ENCODE measurements at regions of chr5 and their contacts with region 1.

Region 1: GRCh38 chr5:5421961-5422818 is at the start of gene ICE1:
- DNase-seq: peak; percentile 98
- ATAC-seq: peak; percentile 100
- H3K4me3 ChIP-seq: peak within 1 kb of the TSS; percentile 99
- H3K27ac ChIP-seq: peak within 1 kb of the TSS in 1 of 2 donors; percentile 84
- H3K4me1 ChIP-seq: peaks cover 1 to 7% of the 10 kb centered on the region in 2 donors
- H3K27me3 ChIP-seq: no peaks in the 10 kb centered on the region
- total RNA-seq, gene ICE1: 28.8 to 35.0 TPM

Region 2: DNA sequence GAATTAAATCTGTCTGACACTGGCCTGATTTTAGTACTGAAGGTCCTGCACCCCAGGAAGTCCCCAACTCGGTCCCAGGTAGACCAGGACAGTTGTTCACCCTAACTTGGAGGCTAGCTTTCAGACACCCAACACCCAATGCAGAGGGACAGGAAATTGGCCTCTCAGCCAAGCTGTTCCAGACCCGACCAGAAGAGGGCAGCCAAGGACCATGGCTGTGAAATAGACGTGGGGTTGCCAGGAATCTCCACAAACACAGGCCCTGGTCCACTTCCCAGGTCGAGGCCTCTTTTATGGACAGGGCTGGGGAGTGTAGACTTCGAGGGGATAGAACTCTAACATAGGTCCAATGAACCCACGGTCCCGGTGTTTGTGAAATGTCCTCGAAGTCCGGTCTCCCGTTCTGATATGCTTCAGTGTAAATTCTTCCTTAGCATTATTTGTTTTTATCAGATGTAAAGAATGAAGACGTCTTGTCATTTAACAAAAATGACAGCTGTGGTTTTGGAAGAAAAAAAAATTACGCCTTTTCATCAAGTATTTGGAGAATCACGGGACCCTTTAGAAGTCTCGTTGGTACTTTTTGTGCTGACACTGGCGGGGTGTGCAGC is 542.4 kb before region 1 on chr5:
- intact Hi-C with region 1: loop called in 1 of 2 experiments (anchors 5 kb)
- DNase-seq: peak; percentile 71 to 87
- ATAC-seq: peak; percentile 83
- H3K4me3 ChIP-seq: no peak overlapping the region
- H3K27ac ChIP-seq: no peak overlapping the region
- H3K4me1 ChIP-seq: no peaks in the 10 kb centered on the region
- H3K27me3 ChIP-seq: no peaks in the 10 kb centered on the region

Region 3: DNA sequence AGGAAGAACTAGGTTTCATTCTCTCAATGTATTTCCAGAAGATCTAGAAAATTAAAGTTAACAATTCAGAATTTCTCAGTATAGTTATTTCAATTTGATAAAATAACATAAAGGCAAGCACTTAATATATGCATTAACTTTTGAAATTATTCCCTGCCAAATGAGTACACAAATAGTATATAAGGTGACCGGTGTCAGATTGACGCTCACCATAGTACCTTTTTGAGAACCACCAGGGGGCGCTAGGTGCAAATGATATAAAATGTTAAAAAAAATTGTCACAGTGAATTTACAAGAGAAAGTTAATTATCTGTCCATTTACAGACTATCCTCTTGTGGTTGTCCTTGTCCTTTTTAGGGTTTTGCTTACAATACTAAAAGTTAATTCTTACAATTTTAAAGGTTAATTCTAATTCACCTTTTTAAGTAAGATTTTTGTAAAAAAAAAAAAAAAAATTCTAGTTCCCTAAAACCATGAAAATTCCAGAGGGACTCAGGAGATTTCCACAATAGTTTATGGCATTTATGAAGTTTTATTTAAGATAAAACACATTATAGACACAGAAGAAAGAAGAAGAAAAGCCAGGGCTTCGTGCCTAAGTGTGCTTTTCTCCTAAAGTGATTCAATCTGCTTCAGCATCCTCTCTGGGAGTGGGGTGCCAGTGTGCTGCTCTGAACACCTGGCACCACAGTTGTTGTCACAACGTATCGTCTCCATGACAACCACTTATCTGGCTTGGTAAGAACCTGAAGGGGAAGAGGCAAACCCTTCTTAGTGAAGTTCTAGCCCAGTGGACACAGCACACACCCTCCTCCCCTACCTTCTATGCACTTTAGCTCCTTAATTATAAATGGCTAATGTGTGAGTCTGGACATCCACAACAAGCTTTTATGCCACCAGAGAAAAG is 280.3 kb before region 1 on chr5:
- intact Hi-C with region 1: loop called (anchors 2 kb)
- DNase-seq: no peak
- ATAC-seq: peak; percentile 57
- H3K4me3 ChIP-seq: no peak overlapping the region
- H3K27ac ChIP-seq: no peak overlapping the region
- H3K4me1 ChIP-seq: no peaks in the 10 kb centered on the region
- H3K27me3 ChIP-seq: peaks cover 0 to 2% of the 10 kb centered on the region in 2 donors

Region 4: DNA sequence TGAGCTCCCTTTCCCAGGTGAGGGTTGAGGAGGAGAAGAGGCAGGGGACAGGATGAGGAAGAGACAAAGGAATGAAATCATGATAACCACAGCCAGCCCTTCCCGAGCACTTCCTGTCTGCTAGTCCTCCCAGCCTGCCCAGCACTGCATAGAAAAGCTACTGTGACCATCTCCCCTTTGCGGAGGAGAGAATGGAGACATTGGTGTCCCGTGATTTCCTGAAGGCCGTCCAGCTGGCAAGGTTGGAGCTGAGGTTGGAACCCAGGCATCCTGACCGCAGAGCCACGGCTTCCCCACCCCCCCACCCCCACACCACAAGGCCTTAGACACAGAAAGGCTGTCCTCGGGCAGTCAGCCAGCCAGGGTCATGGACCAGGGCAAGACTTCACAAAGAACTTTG is 130.8 kb before region 1 on chr5:
- intact Hi-C with region 1: no loop called
- DNase-seq: no peak
- ATAC-seq: no peak
- H3K4me3 ChIP-seq: no peak overlapping the region
- H3K27ac ChIP-seq: no peak overlapping the region
- H3K4me1 ChIP-seq: no peaks in the 10 kb centered on the region
- H3K27me3 ChIP-seq: no peaks in the 10 kb centered on the region

Region 5: GRCh38 chr5:5658226-5658625 is 236.0 kb after region 1 on chr5:
- intact Hi-C with region 1: loop called in 1 of 2 experiments (anchors 10 kb)
- DNase-seq: peak; percentile 79 to 80
- ATAC-seq: peak; percentile 89
- H3K4me3 ChIP-seq: peak overlapping the region; percentile 52 to 97
- H3K27ac ChIP-seq: peak overlapping the region in 1 of 2 donors; percentile 86
- H3K4me1 ChIP-seq: no peaks in the 10 kb centered on the region
- H3K27me3 ChIP-seq: no peaks in the 10 kb centered on the region

Region 6: DNA sequence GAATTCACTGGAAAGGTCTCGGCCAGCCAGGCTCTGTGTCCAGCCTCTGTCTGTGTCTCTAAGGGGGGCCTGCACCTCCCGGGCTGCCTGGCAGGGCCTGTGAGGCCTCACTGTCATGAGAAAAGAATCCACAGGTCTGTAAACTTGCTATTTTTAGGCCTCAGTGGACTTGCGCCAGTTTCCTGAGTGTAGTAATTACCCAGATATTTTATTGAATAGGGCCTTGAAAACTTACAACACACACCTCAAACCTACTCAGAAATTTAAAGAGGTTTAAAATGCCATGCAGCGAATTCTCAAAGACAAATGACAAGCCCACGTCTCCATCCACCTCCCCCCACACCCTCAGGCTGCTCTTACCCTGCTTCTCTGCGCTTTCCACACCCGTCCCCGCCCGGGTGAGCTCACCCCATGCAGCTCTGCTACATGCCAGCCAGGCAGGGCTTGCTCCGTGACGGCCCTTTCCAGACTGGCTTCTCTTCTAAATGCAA is 1282.2 kb after region 1 on chr5:
- intact Hi-C with region 1: loop called in 1 of 2 experiments (anchors 10 kb)
- DNase-seq: peak; percentile 80 to 87
- ATAC-seq: peak; percentile 76
- H3K4me3 ChIP-seq: no peak overlapping the region
- H3K27ac ChIP-seq: peak overlapping the region; percentile 96
- H3K4me1 ChIP-seq: peaks cover 0 to 3% of the 10 kb centered on the region in 2 donors
- H3K27me3 ChIP-seq: no peaks in the 10 kb centered on the region

Region 7: GRCh38 chr5:6712577-6713275 is 1290.5 kb after region 1 on chr5:
- intact Hi-C with region 1: loop called (anchors 10 kb)
- DNase-seq: peak; percentile 98 to 99
- ATAC-seq: peak; percentile 95
- H3K4me3 ChIP-seq: peak overlapping the region; percentile 56 to 62
- H3K27ac ChIP-seq: peak overlapping the region; percentile 51 to 81
- H3K4me1 ChIP-seq: peaks cover 4 to 7% of the 10 kb centered on the region in 2 donors
- H3K27me3 ChIP-seq: no peaks in the 10 kb centered on the region